ENCODE measurements at regions of chr1 and their contacts with region 1.

Region 1: DNA sequence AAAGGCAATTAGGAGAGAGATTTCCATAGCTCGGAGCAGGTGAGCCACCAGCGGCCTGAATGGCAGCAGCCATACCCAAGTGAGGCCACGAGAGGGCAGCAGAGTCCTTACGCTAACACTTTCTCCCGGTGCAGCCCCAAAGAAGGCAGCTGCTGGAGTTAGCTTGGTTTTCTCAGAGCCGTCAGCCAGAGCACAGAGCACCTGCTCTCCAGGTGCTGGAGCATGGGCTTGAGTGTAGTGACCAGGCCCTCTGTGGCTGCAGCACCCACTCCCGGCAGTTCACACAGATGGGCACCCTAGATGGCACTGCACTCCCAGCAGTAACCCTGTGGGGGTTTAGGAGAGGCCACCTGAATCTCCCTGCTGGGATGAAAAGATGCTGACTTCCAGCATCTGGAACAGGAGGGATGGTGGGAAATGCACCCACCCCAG is 45.8 kb downstream of the TMCC2 start:
- DNase-seq: no peak
- H3K4me3 ChIP-seq: no peak overlapping the region
- CTCF ChIP-seq: peak; percentile 96

Region 2: GRCh38 chr1:204989266-204990058 is 284.1 kb before region 1 on chr1:
- CTCF ChIA-PET with region 1: interaction called, 10 read pairs
- POLR2A ChIA-PET with region 1: no interaction called
- DNase-seq: peak; percentile 17
- H3K4me3 ChIP-seq: no peak overlapping the region
- CTCF ChIP-seq: peak; percentile 98

Region 3: GRCh38 chr1:205284343-205285144 is 11.0 kb after region 1 on chr1:
- CTCF ChIA-PET with region 1: interaction called, 158 read pairs
- POLR2A ChIA-PET with region 1: interaction called, 5 read pairs
- DNase-seq: peak; percentile 94
- H3K4me3 ChIP-seq: no peak overlapping the region
- CTCF ChIP-seq: peak; percentile 51

Region 4: DNA sequence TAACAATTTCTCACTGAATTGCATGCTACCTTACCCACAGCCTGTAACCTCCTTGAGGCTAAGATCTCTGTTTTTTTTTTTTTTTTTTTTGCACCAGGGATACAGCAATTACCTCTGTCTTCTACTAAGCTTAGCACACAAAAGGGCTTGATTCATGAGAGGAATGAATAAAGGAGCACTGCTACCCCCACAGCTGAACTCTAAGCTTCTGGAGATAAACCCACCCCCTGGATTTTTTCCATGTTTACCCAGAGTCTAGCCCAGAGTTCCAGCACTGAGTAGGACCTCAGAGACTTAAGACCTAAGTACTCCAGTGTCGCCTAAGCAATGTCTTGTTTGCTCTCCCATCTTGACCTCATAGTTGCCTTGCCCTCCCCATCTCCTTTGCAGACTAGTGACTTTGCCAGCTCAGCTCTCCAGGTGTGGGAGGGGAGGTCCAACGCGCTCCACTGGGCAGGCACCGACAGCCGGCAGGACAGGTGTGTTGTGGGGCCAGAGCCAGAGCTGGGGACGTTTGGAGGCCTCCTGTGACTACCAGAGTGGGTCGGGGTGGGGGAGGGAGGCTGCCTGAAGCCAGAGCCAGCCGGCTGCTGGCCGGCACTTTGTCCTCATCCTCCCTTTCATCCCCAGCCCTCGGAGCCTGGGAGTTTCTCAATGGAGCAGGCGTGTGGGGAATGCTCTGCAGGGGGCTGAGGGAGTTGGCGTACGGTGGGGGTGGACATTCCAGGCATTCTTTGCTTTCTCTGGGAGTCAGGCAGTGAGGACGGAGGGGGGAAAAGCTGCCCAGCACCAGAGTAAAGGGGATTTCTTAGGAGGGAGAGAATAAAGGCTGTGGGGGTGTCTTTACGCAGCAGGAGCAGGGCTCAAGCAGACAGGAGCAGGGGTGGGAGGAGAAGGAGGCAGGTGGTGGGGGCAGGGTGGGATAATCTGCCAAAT is 27.6 kb after region 1 on chr1:
- CTCF ChIA-PET with region 1: interaction called, 69 read pairs
- POLR2A ChIA-PET with region 1: interaction called, 3 read pairs
- DNase-seq: peak; percentile 92
- H3K4me3 ChIP-seq: no peak overlapping the region; the same call in 1 of the 2 replicates
- CTCF ChIP-seq: no peak

Region 5: DNA sequence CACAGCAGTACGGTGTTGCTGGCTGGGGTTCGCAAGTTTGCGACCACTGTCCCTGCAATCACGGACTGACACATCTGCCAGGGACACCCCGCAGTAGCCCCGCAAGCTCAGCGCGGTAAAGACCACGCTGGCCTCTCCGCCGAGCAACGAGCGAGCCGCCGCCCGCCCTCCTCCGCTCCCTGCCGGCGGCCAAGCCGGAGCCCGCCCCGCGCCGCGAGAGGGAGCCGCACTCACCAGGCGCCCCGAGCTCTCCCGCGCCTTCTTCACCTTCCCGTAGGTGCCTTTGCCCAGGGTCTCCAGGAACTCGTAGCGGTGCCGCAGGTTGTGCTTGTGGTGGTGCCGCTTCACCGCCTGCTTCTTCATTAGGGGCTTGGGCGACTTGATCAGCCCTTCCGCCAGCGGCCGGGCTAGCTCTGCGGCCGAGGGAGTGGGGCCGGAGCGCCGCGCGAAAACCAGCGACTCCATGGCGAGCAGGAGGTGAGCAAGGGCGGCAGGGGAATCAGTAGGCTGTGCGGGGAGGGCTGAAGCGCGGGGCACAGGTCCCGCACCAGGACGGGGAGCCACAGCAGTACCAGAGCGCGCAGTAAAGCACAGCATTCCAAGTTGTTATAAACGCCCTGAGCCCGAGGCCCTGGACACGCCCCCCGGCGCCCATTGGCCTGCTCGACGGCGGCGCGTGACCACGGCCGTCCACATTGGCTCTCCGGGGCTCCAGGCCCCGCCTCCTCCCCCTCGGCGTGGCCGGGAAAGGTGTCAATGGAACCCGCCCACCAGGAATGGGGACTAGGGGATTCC is 47.8 kb after region 1 on chr1 and contains the start of gene NUAK2:
- CTCF ChIA-PET with region 1: interaction called, 2,093 read pairs
- POLR2A ChIA-PET with region 1: interaction called, 16 read pairs
- DNase-seq: no peak
- H3K4me3 ChIP-seq: peak within 1 kb of the TSS; percentile 98
- CTCF ChIP-seq: peak; percentile 48

Measured in AG04449 (cell line).